ENCODE measurements at regions of chr6 and their contacts with region 1.

Region 1: GRCh38 chr6:22828179-22829062 is 259.1 kb downstream of the HDGFL1 start:
- DNase-seq: peak; percentile 99
- H3K4me3 ChIP-seq: peak overlapping the region in 1 of 3 experiments; percentile 36
- H3K27ac ChIP-seq: peak overlapping the region; percentile 96
- H3K4me1 ChIP-seq: peaks cover 31% of the 10 kb centered on the region
- H3K27me3 ChIP-seq: no peaks in the 10 kb centered on the region
- CTCF ChIP-seq: peak; percentile 85 to 95
- POLR2A ChIP-seq: no peak

Region 2: DNA sequence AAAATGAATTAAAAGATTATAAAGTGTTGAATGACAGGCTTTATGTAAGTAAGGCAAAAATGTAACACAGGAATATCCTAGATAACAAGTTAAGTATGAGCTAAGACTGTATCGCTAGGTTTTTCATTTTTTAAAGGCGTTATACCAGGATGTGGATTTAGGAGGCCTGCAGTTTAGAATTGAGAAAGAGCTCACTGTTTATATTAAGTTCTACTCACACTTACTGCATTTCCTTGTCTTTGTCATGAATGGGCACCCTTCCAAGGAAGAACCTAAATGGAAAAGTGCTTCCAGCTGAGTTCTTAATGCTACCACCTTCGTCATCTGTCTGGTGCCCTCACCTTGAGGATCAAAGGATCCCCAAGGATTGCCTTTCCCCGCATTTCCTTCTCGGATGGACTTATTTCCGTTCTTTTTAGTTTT is 1086.2 kb before region 1 on chr6:
- CTCF ChIA-PET with region 1: no interaction called
- POLR2A ChIA-PET with region 1: no interaction called
- dilution Hi-C with region 1: no loop called
- intact Hi-C with region 1: loop called (anchors 5 kb)
- DNase-seq: peak; percentile 89
- H3K4me3 ChIP-seq: peak overlapping the region in 1 of 3 experiments; percentile 53
- H3K27ac ChIP-seq: peak overlapping the region; percentile 95
- H3K4me1 ChIP-seq: peaks cover 37% of the 10 kb centered on the region
- H3K27me3 ChIP-seq: no peaks in the 10 kb centered on the region
- CTCF ChIP-seq: no peak
- POLR2A ChIP-seq: no peak

Region 3: DNA sequence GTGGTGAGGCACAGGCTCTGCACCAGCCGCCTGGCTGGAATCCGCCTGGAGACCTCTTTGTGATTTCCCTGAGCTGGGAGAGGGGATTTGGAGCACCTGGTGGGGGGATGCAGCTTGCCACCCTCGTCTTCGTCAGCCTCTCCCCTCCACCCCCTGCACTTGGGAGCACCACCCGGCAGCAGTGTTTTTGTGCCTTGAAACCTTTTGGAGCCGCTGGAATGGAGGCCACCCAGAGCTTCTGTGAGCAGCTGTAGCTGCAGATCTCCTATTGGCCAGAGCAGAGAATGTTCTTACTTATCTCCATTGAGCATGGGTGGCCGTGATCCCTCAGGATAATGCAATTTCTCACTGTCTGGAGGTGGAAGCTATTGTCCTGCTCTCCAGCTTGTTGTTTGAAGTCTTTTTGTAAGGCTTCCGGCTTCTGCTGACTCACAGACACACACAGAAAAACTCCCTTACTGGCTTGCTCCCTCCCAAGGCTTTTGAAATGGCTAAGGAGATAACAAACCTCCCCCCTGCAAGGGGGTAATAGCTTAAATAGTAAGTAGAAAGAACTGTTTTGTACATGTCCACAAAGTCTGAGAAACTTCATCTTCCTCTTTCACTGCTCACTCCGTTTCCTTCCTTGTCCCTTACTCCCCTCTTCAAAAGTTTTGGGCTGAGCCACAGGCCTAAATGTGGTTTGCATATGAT is 802.8 kb before region 1 on chr6:
- CTCF ChIA-PET with region 1: interaction called, 4 read pairs
- POLR2A ChIA-PET with region 1: no interaction called
- dilution Hi-C with region 1: no loop called
- intact Hi-C with region 1: loop called (anchors 10 kb)
- DNase-seq: peak; percentile 95
- H3K4me3 ChIP-seq: no peak overlapping the region
- H3K27ac ChIP-seq: peak overlapping the region; percentile 86
- H3K4me1 ChIP-seq: peaks cover 16% of the 10 kb centered on the region
- H3K27me3 ChIP-seq: no peaks in the 10 kb centered on the region
- CTCF ChIP-seq: no peak
- POLR2A ChIP-seq: no peak

Region 4: GRCh38 chr6:22320750-22321149 is 507.7 kb before region 1 on chr6:
- CTCF ChIA-PET with region 1: no interaction called
- POLR2A ChIA-PET with region 1: no interaction called
- dilution Hi-C with region 1: no loop called
- intact Hi-C with region 1: loop called (anchors 5 kb)
- DNase-seq: peak; percentile 79
- H3K4me3 ChIP-seq: no peak overlapping the region
- H3K27ac ChIP-seq: no peak overlapping the region
- H3K4me1 ChIP-seq: peaks cover 3% of the 10 kb centered on the region
- H3K27me3 ChIP-seq: no peaks in the 10 kb centered on the region
- CTCF ChIP-seq: no peak
- POLR2A ChIP-seq: no peak

Region 5: GRCh38 chr6:22550971-22551670 is 277.3 kb before region 1 on chr6:
- CTCF ChIA-PET with region 1: no interaction called
- POLR2A ChIA-PET with region 1: no interaction called
- dilution Hi-C with region 1: no loop called
- intact Hi-C with region 1: no loop called
- DNase-seq: no peak
- H3K4me3 ChIP-seq: no peak overlapping the region
- H3K27ac ChIP-seq: no peak overlapping the region
- H3K4me1 ChIP-seq: no peaks in the 10 kb centered on the region
- H3K27me3 ChIP-seq: no peaks in the 10 kb centered on the region
- CTCF ChIP-seq: no peak
- POLR2A ChIP-seq: no peak

Region 6: GRCh38 chr6:22598339-22598738 is 230.1 kb before region 1 on chr6:
- CTCF ChIA-PET with region 1: no interaction called
- POLR2A ChIA-PET with region 1: no interaction called
- dilution Hi-C with region 1: no loop called
- intact Hi-C with region 1: no loop called
- DNase-seq: no peak
- H3K4me3 ChIP-seq: no peak overlapping the region
- H3K27ac ChIP-seq: no peak overlapping the region
- H3K4me1 ChIP-seq: no peaks in the 10 kb centered on the region
- H3K27me3 ChIP-seq: no peaks in the 10 kb centered on the region
- CTCF ChIP-seq: no peak
- POLR2A ChIP-seq: no peak

Region 7: GRCh38 chr6:22756365-22756764 is 72.1 kb before region 1 on chr6:
- CTCF ChIA-PET with region 1: no interaction called
- POLR2A ChIA-PET with region 1: no interaction called
- dilution Hi-C with region 1: no loop called
- intact Hi-C with region 1: no loop called
- DNase-seq: peak; percentile 18
- H3K4me3 ChIP-seq: no peak overlapping the region
- H3K27ac ChIP-seq: no peak overlapping the region
- H3K4me1 ChIP-seq: peaks cover 8% of the 10 kb centered on the region
- H3K27me3 ChIP-seq: no peaks in the 10 kb centered on the region
- CTCF ChIP-seq: no peak
- POLR2A ChIP-seq: no peak

Region 8: DNA sequence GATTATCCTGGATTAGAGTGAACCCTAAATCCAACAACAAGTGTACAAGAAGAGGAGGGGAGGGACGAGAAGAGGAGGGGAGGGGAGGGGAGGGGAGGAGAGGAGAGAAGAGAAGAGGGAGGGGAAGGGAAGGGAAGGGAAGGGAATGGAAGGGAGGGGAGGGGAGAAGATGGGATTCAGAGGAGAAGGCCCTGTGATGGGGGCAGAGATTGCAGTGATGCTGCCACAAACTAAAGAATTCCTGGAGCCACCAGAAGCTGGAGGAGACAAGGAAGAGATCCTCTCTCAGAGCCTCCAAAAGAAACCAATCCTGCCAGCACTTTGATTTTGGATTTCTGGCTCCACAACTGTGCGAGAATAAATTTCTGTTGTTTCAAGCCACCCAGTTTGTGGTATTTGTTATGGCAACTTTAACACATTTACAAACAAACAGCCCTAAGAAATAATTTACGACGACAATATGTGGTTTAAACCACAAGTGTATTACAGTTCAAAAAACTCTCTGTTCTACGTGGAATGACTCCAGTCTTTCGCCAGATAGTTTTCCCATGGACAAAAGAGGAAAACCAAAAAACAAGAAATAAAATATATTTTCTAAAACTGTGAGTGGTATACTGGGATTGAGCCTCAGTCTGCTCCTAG is 23.7 kb before region 1 on chr6:
- CTCF ChIA-PET with region 1: no interaction called
- POLR2A ChIA-PET with region 1: no interaction called
- dilution Hi-C with region 1: no loop called
- intact Hi-C with region 1: no loop called
- DNase-seq: no peak
- H3K4me3 ChIP-seq: no peak overlapping the region
- H3K27ac ChIP-seq: no peak overlapping the region
- H3K4me1 ChIP-seq: peaks cover 4% of the 10 kb centered on the region
- H3K27me3 ChIP-seq: no peaks in the 10 kb centered on the region
- CTCF ChIP-seq: no peak
- POLR2A ChIP-seq: no peak

Region 9: DNA sequence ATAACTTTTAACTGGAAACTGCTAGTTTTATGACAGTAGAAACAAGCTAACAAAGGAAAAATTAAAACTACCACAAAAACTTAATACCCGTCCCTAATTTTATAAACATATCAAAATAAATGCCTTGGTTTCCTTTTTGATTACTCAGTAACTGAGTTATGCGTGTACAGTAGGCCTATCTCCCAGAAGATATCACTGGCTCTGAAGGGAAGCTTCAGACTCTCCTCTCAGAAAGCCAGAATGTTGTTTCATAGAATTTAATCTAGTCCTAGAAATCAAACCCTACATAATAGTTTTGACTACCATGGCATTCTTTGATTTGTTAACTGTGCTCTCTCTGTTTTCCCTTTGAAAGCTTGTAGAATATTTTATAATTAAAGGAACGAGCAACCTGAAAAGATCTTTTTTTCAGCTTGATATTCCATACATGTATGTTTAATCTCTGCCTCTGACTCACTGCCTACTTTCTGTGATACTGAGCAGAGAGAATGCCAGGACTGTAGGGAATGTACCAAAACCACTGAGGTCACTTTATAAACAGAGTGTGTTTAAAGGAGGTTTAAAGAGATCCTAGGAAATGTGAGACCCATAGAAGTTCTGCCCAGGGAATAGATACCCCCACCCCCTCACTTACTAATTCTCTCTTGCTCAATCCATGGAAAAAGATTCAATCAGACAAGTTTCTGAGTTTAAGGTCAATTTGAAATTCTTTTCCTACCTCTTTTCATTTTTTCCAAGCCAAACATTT is 52.4 kb after region 1 on chr6:
- CTCF ChIA-PET with region 1: interaction called, 4 read pairs
- POLR2A ChIA-PET with region 1: no interaction called
- dilution Hi-C with region 1: no loop called
- intact Hi-C with region 1: loop called (anchors 1 kb)
- DNase-seq: peak; percentile 92
- H3K4me3 ChIP-seq: no peak overlapping the region
- H3K27ac ChIP-seq: peak overlapping the region; percentile 80
- H3K4me1 ChIP-seq: peaks cover 53% of the 10 kb centered on the region
- H3K27me3 ChIP-seq: no peaks in the 10 kb centered on the region
- CTCF ChIP-seq: no peak
- POLR2A ChIP-seq: no peak

Region 10: DNA sequence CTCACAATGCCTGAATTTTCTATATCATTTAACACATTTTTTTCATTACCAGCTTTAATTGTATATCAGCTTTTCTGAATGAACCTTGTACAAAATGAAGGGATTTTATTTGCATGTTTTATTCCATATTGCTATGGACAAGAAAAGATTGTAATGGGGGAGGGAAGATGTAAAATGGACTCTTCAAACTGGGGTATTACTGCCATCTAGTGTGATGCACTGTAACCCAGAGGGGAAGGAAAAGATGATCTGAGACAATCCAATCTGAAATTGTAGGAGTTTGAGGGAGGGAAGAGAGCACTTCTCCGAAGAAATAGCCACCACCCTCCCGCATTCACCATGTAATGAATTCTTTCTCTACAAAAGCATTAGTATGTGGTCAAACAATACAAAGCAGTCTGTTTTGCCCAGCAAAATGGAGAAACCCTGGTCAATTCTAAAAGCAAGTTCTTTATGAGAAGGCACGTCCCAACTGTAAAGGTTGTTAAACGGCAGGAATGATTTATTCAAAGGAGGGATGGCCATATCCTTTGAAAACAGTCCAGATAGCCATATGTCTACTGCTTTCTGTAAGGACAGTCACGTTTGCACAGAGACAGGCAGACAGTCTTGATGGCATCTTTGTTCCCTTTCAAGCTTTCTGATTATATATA is 618.1 kb after region 1 on chr6:
- CTCF ChIA-PET with region 1: no interaction called
- POLR2A ChIA-PET with region 1: no interaction called
- dilution Hi-C with region 1: no loop called
- intact Hi-C with region 1: loop called (anchors 1 kb)
- DNase-seq: peak; percentile 69
- H3K4me3 ChIP-seq: no peak overlapping the region
- H3K27ac ChIP-seq: no peak overlapping the region
- H3K4me1 ChIP-seq: no peaks in the 10 kb centered on the region
- H3K27me3 ChIP-seq: no peaks in the 10 kb centered on the region
- CTCF ChIP-seq: peak; percentile 34 to 48
- POLR2A ChIP-seq: no peak